Caco-2 (cell line): ENCODE measurements at regions of chr18 and their contacts with region 1.

Region 1: DNA sequence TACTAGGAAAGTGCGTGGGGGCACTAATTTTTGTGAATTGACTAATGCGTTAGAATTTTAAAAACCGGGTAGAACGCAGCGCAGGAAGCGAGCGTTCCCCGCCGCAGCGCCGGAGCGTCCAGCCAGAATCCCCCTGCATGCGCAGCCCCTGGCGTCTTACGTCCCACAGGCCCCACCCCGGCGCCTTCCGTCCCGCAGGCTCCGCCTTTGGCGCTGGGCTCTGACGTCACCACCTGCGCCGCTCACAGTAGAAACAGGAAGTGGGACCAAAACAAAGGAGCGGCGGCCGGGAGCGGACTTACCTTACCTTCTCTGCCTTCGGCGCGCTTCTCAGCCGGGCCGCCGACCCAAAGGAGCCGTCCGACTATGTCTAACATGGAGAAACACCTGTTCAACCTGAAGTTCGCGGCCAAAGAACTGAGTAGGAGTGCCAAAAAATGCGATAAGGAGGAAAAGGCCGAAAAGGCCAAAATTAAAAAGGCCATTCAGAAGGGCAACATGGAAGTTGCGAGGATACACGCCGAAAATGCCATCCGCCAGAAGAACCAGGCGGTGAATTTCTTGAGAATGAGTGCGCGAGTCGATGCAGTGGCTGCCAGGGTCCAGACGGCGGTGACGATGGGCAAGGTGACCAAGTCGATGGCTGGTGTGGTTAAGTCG is at the start of gene CHMP1B:
- DNase-seq: peak; percentile 96 to 97
- H3K4me3 ChIP-seq: peak within 1 kb of the TSS; percentile 91
- H3K4me3 Mint-ChIP-seq: peak within 1 kb of the TSS; percentile 93
- H3K27ac Mint-ChIP-seq: peak within 1 kb of the TSS; percentile 93
- H3K4me1 ChIP-seq: peaks cover 47% of the 10 kb centered on the region
- H3K4me1 Mint-ChIP-seq: peaks cover 13% of the 10 kb centered on the region
- H3K27me3 ChIP-seq: no peaks in the 10 kb centered on the region
- H3K27me3 Mint-ChIP-seq: no peaks in the 10 kb centered on the region
- CTCF ChIP-seq: no peak
- total RNA-seq, gene CHMP1B: 45.2 and 56.5 TPM in 2 replicates

Region 2: GRCh38 chr18:11733031-11733430 is 118.2 kb before region 1 on chr18:
- CTCF ChIA-PET with region 1: interaction called, 3 read pairs
- POLR2A ChIA-PET with region 1: no interaction called
- intact Hi-C with region 1: loop called (anchors 1 kb)
- DNase-seq: peak; percentile 81 to 88
- H3K4me3 ChIP-seq: no peak overlapping the region
- H3K4me3 Mint-ChIP-seq: no peak overlapping the region
- H3K27ac Mint-ChIP-seq: no peak overlapping the region
- H3K4me1 ChIP-seq: peaks cover 4% of the 10 kb centered on the region; the same call in 1 of the 2 replicates
- H3K4me1 Mint-ChIP-seq: no peaks in the 10 kb centered on the region
- H3K27me3 ChIP-seq: no peaks in the 10 kb centered on the region
- H3K27me3 Mint-ChIP-seq: no peaks in the 10 kb centered on the region
- CTCF ChIP-seq: peak; percentile 92 to 96

Region 3: GRCh38 chr18:11808001-11808855 is 43.0 kb before region 1 on chr18:
- CTCF ChIA-PET with region 1: no interaction called
- POLR2A ChIA-PET with region 1: interaction called, 9 read pairs
- intact Hi-C with region 1: loop called (anchors 2 kb)
- DNase-seq: peak; percentile 66 to 71
- H3K4me3 ChIP-seq: no peak overlapping the region
- H3K4me3 Mint-ChIP-seq: peak overlapping the region; percentile 51
- H3K27ac Mint-ChIP-seq: peak overlapping the region; percentile 79
- H3K4me1 ChIP-seq: peaks cover 56% of the 10 kb centered on the region
- H3K4me1 Mint-ChIP-seq: peaks cover 42% of the 10 kb centered on the region
- H3K27me3 ChIP-seq: no peaks in the 10 kb centered on the region
- H3K27me3 Mint-ChIP-seq: no peaks in the 10 kb centered on the region
- CTCF ChIP-seq: no peak

Region 4: DNA sequence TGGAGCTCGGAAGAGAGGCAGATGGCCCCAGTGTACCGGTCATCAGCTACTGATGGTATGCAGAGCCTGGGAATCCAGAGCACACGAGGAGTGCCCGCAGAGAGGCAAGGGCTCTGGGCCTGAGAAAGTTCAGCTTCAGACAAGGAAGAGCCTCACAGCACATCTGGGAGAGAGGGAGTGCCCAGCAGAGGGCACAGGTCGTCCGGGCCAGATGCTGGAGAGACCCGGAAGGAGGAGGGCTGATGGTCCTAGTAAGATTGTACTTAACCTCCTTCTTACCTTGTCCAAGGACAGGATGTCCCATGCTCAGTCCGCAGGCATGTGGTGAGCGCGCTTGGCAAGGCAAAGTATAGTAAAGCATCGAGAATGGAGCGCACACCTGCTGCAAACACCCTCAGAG is 24.4 kb before region 1 on chr18:
- CTCF ChIA-PET with region 1: interaction called, 3 read pairs
- POLR2A ChIA-PET with region 1: no interaction called
- intact Hi-C with region 1: loop called (anchors 1 kb)
- DNase-seq: no peak
- H3K4me3 ChIP-seq: no peak overlapping the region
- H3K4me3 Mint-ChIP-seq: no peak overlapping the region
- H3K27ac Mint-ChIP-seq: peak overlapping the region; percentile 65
- H3K4me1 ChIP-seq: peaks cover 28% of the 10 kb centered on the region
- H3K4me1 Mint-ChIP-seq: peaks cover 20% of the 10 kb centered on the region
- H3K27me3 ChIP-seq: no peaks in the 10 kb centered on the region
- H3K27me3 Mint-ChIP-seq: no peaks in the 10 kb centered on the region
- CTCF ChIP-seq: no peak

Region 5: DNA sequence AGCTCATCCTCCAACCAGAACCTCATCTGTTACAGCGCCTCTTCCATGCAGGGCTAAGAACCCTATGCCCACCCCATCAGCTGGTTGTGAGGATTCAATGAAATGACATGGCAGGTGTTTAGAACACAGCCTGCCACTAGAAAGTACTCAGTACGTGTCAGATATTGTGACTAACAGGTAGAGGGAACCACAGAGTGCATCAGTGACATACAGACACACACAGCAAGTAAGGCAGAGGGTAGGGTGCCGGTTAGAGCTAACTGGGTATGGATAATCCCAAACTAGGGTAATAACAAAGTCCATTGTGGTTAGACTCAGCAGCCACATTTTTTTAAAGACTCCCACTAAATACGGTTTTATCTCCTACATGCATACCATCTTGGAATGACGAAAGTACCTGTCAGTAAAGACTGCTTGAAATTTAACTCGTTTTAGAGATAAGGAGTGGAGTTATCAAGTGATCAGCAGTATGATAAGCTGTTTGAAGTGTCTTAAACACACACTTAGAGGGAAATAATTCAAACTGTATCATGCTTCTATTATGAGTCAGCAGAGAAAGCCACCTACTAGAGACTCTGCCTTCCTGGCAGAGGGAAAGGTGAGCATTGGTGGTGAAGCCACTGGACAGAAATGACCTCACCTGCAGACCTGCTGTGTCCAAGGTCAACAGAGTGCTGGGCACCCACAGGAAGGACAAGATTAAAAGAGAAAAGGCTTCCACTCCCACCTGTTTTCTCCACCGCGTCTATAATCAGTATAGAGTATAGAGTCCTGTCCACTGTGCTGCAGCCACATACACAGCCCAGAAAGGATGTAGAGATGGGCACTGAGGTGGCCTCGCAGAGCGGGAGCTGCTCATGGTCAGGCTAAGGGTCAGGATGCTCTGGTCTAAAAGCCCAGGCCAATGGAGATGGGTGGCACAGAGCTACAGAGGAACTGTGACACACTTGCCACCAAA is 36.3 kb after region 1 on chr18:
- CTCF ChIA-PET with region 1: interaction called, 3 read pairs
- POLR2A ChIA-PET with region 1: interaction called, 5 read pairs
- intact Hi-C with region 1: loop called (anchors 5 kb)
- DNase-seq: peak; percentile 82 to 89
- H3K4me3 ChIP-seq: no peak overlapping the region
- H3K4me3 Mint-ChIP-seq: peak overlapping the region; percentile 12
- H3K27ac Mint-ChIP-seq: peak overlapping the region; percentile 78
- H3K4me1 ChIP-seq: peaks cover 54% of the 10 kb centered on the region
- H3K4me1 Mint-ChIP-seq: peaks cover 34% of the 10 kb centered on the region
- H3K27me3 ChIP-seq: no peaks in the 10 kb centered on the region
- H3K27me3 Mint-ChIP-seq: no peaks in the 10 kb centered on the region
- CTCF ChIP-seq: no peak

Region 6: DNA sequence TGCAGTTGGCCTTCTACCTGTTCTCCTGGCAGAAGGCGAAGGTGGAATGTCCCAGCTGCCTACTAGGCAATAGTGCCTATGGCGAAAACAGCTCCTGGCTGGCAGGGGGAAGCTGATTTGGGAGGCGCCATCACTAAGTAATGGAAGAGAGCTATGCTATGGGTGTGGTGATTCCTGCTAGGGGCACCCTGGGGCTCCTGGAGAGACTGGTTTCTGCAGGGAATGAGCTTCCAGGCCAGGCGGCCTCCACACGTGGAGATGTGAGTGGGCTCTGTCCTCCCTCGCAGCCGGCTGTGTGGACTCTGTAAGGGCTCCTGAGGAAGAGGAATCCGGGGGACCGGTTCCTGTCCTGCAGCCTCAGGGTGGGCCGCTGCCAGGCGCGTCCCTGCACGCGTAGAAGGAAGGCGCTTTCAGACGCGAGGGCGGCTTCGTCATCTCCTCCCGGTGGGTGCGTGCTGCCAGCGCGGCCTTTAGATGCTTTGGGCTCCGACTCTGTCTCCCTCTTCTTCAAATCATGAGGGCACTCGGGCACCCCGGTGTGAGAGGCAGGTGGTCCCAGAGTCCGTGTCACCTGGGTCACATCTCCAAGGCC is 186.9 kb after region 1 on chr18:
- CTCF ChIA-PET with region 1: no interaction called
- POLR2A ChIA-PET with region 1: no interaction called
- intact Hi-C with region 1: no loop called
- DNase-seq: peak in 1 of 2 experiments; percentile 24
- H3K4me3 ChIP-seq: peak overlapping the region; percentile 52; the same call in 1 of the 2 replicates
- H3K4me3 Mint-ChIP-seq: peak overlapping the region; percentile 80
- H3K27ac Mint-ChIP-seq: no peak overlapping the region
- H3K4me1 ChIP-seq: peaks cover 3% of the 10 kb centered on the region; the same call in 1 of the 2 replicates
- H3K4me1 Mint-ChIP-seq: no peaks in the 10 kb centered on the region
- H3K27me3 ChIP-seq: no peaks in the 10 kb centered on the region
- H3K27me3 Mint-ChIP-seq: peaks cover 2% of the 10 kb centered on the region
- CTCF ChIP-seq: no peak